ENCODE measurements at regions of chr12 and their contacts with region 1.

Region 1: DNA sequence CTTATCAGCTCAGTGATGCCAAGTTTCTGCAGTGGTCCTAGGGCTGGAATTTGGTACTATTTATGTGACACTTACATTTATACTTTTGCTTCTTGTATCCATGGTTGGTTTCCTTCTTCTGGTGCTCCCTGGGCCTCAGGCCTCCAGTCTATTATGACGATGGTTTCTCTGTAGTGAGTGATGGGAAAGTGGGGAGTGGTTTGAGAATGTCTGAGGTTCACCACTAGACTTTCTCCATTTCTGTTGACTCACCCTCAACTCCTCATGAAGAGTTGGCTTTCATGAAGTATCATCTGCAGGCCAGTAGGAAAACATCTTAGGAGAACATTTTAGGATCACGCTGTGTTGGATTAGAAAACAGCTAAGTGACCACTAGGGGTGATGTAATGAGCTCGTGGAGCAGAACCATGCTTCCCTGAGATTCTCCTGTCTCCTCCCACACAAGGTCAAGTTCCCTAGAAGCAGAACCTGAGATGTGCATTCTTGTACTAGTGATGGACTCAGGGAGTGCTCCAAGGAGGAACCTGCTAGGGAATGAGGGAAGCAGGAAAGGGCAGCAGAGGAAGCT is 32.1 kb downstream of the RPH3A start:
- DNase-seq: no peak
- ATAC-seq: peak; percentile 55
- H3K4me3 Mint-ChIP-seq: no peak overlapping the region
- H3K27ac Mint-ChIP-seq: no peak overlapping the region
- H3K4me1 Mint-ChIP-seq: peaks cover 26% of the 10 kb centered on the region
- H3K27me3 Mint-ChIP-seq: no peaks in the 10 kb centered on the region; the same call in 1 of the 2 replicates
- CTCF ChIP-seq: no peak

Region 2: GRCh38 chr12:112812600-112813406 is 10.9 kb before region 1 on chr12:
- CTCF ChIA-PET with region 1: interaction called, 10 read pairs
- POLR2A ChIA-PET with region 1: no interaction called
- DNase-seq: no peak
- ATAC-seq: no peak
- H3K4me3 Mint-ChIP-seq: no peak overlapping the region
- H3K27ac Mint-ChIP-seq: no peak overlapping the region
- H3K4me1 Mint-ChIP-seq: peaks cover 13% of the 10 kb centered on the region
- H3K27me3 Mint-ChIP-seq: no peaks in the 10 kb centered on the region
- CTCF ChIP-seq: no peak